Endothelial cell of umbilical vein (primary cell): ENCODE measurements at regions of chr13 and their contacts with region 1.

Region 1: DNA sequence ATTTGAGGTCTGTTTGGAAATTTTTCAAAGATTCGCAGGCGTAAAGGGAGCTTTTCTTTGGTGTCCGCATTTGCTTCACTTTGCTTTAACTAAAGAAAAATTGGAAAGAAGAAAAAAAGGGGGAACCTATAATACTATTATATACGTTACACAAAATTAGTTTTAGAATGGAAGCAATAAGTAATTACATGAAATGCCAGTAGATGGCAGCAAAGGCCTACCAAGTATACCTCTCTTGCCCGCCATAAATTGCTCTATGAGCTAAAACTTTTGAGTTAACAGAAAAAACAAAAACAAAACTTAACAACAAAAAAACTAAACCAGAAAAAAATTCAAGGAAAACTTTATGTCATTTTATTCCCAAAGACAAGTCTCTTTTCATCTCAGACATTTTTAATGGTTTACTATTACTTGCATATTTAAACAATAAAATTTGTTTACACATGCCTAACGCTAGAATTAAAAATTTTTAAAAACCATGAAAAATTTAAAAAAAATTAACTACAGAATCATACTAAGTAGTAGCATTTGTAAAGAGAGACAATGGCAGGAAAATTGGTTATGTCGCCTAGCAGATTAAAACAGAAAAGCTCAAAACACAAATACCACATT is 271.4 kb downstream of the NALCN start:
- DNase-seq: peak; percentile 66
- H3K4me3 ChIP-seq: no peak overlapping the region
- H3K27ac ChIP-seq: no peak overlapping the region
- H3K4me1 ChIP-seq: peaks cover 12% of the 10 kb centered on the region
- H3K27me3 ChIP-seq: no peaks in the 10 kb centered on the region
- CTCF ChIP-seq: peak; percentile 36 to 42
- POLR2A ChIP-seq: no peak

Region 2: GRCh38 chr13:101211261-101211660 is 66.3 kb after region 1 on chr13:
- CTCF ChIA-PET with region 1: interaction called, 11 read pairs
- POLR2A ChIA-PET with region 1: no interaction called
- dilution Hi-C with region 1: no loop called
- intact Hi-C with region 1: loop called (anchors 2 kb)
- DNase-seq: peak; percentile 72
- H3K4me3 ChIP-seq: no peak overlapping the region
- H3K27ac ChIP-seq: peak overlapping the region; percentile 62
- H3K4me1 ChIP-seq: peaks cover 31% of the 10 kb centered on the region
- H3K27me3 ChIP-seq: no peaks in the 10 kb centered on the region
- CTCF ChIP-seq: no peak
- POLR2A ChIP-seq: no peak

Region 3: DNA sequence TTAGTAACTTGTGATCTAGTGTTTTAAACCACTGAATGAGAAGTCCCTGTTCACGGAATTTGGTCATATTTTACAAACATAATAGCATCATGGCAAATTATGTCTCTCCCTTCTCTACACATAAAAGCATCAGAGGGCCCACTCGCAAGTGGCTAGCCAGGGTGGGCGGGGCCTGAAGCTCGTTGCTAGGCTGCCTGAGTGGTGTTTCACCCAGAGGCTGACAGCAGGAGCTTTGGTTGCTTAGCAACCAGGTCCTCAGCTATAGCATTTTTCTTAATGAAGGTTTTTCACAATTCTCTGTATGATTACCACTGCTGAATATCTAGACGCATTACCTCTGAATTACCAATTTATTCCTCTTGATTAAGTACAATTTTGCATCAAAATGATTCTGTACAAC is 144.8 kb after region 1 on chr13:
- CTCF ChIA-PET with region 1: no interaction called
- POLR2A ChIA-PET with region 1: no interaction called
- dilution Hi-C with region 1: no loop called
- intact Hi-C with region 1: no loop called
- DNase-seq: peak; percentile 16
- H3K4me3 ChIP-seq: no peak overlapping the region
- H3K27ac ChIP-seq: no peak overlapping the region
- H3K4me1 ChIP-seq: no peaks in the 10 kb centered on the region
- H3K27me3 ChIP-seq: no peaks in the 10 kb centered on the region
- CTCF ChIP-seq: no peak
- POLR2A ChIP-seq: no peak

Region 4: DNA sequence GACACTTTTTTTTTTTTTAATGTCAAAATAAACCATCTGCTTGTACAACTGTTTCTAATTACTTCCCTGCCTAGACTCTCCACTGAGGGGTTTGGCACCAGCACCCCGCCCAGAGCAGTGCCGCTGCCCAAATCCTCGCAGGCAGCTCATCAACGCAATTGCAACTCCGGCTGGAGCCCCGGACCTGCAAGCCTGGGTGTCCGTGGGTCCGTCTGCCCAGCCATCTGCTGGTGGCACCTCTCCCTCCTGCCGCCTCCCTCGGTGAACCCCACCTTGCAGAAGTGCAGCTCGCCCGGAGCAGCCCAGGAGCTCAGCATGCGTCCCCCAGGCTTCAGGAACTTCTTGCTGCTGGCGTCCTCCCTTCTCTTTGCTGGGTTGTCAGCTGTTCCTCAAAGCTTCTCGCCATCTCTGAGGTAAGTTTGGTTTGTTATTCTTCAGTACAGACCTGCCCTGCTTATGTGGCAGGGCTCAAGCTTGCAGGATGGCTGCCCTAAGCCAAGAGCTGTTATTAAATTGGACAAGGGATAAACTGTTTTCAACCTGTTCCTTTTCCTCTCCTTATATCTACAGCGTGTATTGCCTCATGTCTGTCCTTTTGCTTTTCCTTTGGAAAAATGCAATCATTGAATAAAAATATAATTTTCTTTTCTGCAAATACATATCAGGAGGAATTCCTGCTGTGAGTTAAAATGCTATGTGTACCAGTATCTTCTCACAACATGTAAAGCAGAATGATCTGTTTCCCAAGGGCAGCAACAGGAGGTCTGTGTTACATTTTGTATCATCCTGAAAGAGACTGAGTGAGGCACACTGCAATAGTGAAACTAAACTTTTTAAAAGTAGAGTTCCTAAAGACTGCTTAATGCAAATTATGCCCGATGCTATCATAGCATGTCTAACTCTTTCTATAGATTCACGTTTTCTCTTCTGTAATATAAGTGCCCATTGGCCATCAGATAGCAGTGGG is 307.9 kb after region 1 on chr13 and contains the start of gene ITGBL1:
- CTCF ChIA-PET with region 1: interaction called, 22 read pairs
- POLR2A ChIA-PET with region 1: no interaction called
- dilution Hi-C with region 1: no loop called
- intact Hi-C with region 1: no loop called
- DNase-seq: peak; percentile 48
- H3K4me3 ChIP-seq: peak within 1 kb of the TSS in 2 of 3 experiments; percentile 24 to 37
- H3K27ac ChIP-seq: peak within 1 kb of the TSS; percentile 94
- H3K4me1 ChIP-seq: peaks cover 68% of the 10 kb centered on the region
- H3K27me3 ChIP-seq: no peaks in the 10 kb centered on the region
- CTCF ChIP-seq: no peak
- POLR2A ChIP-seq: no peak
- total RNA-seq, gene ITGBL1: 8.8 and 9.9 TPM in 2 replicates

Region 5: GRCh38 chr13:101492251-101492910 is 347.5 kb after region 1 on chr13:
- CTCF ChIA-PET with region 1: interaction called, 19 read pairs
- POLR2A ChIA-PET with region 1: no interaction called
- dilution Hi-C with region 1: no loop called
- intact Hi-C with region 1: no loop called
- DNase-seq: peak; percentile 83
- H3K4me3 ChIP-seq: no peak overlapping the region
- H3K27ac ChIP-seq: peak overlapping the region; percentile 20
- H3K4me1 ChIP-seq: peaks cover 41% of the 10 kb centered on the region
- H3K27me3 ChIP-seq: no peaks in the 10 kb centered on the region
- CTCF ChIP-seq: no peak
- POLR2A ChIP-seq: no peak

Region 6: DNA sequence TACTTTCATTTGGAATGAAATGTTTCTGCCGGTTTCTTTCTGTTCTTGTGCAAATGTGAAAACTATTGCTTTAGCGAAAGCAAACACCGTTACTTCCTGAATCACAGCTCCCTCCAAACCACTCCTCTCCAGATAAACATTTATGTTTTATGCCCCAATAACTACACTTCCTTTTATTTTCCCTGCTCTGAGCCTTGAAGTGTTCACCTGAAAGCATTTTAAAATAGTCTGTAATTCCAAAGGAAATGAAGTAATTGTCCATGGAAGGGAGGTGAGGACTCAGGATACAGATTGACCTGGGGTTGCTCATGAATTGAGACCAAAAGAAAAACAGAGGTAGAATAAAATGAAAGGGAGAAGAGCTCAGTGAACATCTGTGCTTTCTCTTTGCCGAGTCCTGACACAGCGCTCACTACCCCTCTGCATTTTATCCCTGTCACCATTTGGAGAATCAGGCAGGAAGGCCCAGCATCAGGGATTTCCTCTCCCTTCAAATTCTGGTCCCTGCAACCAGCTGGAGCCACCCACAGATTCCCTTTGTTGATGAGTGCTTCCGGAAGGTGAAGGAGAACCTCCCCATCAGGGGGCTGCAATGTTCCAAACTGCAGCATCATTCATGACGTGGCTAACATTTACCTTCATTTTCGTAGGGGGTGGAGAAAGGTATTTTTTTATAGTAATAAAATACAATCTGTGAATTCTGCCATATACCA is 479.5 kb after region 1 on chr13:
- CTCF ChIA-PET with region 1: interaction called, 4 read pairs
- POLR2A ChIA-PET with region 1: no interaction called
- dilution Hi-C with region 1: no loop called
- intact Hi-C with region 1: loop called (anchors 5 kb)
- DNase-seq: peak; percentile 83
- H3K4me3 ChIP-seq: peak overlapping the region in 2 of 3 experiments; percentile 23 to 62
- H3K27ac ChIP-seq: peak overlapping the region; percentile 91
- H3K4me1 ChIP-seq: peaks cover 32% of the 10 kb centered on the region
- H3K27me3 ChIP-seq: no peaks in the 10 kb centered on the region
- CTCF ChIP-seq: no peak
- POLR2A ChIP-seq: no peak

Region 7: DNA sequence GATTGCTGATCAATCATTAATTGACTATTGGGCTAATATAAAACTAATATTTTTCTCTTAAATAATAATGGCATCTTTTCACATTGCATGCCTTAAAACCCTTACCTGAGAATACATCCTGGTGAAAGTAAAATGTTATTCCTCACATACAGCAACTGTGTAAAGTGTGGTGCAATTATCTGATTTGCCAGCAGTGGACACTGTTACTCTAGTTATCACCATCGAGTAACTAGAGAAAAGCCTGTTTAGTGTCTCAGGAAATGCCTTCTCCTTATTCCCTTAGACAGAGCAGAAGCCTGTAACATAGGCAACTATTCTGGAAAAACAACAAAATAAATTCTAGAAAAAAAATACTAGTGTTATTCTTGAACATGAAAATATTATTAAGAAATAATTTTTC is 797.1 kb after region 1 on chr13:
- CTCF ChIA-PET with region 1: interaction called, 9 read pairs
- POLR2A ChIA-PET with region 1: no interaction called
- dilution Hi-C with region 1: no loop called
- intact Hi-C with region 1: loop called (anchors 1 kb)
- DNase-seq: peak; percentile 28
- H3K4me3 ChIP-seq: no peak overlapping the region
- H3K27ac ChIP-seq: no peak overlapping the region
- H3K4me1 ChIP-seq: no peaks in the 10 kb centered on the region
- H3K27me3 ChIP-seq: no peaks in the 10 kb centered on the region
- CTCF ChIP-seq: peak; percentile 37 to 38
- POLR2A ChIP-seq: no peak

Region 8: DNA sequence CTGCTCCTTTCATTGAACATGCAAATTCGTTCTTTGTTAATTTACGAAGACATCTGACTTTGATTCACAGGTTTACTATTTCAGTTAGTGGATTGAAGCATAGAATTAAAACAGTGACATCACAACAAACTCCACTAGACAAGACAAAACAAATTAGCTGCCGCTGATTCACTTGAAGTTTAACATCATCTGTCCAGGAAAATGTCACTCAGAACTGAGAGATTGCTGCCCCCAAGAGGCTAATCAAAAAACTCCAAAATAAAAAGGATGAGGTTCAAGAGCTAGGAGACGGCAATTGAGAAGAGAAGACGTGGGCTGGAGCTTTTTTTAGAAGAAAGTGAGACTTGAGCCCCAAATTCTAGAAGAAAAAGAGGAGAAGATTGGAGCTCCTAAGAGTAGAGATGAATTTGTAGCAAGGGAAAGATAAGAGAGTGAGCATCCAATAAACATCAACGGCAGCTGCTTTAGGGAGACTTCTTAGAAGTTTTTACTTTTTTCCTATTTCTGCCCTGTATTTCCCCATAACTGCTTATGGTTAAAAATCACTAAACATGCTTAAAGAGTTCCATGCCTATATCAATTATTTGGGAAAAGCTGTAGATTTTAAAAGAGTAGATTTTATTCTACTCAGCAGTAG is 1411.1 kb after region 1 on chr13:
- CTCF ChIA-PET with region 1: interaction called, 83 read pairs
- POLR2A ChIA-PET with region 1: no interaction called
- dilution Hi-C with region 1: no loop called
- intact Hi-C with region 1: loop called (anchors 1 kb)
- DNase-seq: peak; percentile 52
- H3K4me3 ChIP-seq: no peak overlapping the region
- H3K27ac ChIP-seq: no peak overlapping the region
- H3K4me1 ChIP-seq: no peaks in the 10 kb centered on the region
- H3K27me3 ChIP-seq: peaks cover 2 to 3% of the 10 kb centered on the region in 2 experiments
- CTCF ChIP-seq: peak; percentile 28 to 47
- POLR2A ChIP-seq: no peak